ENCODE measurements at regions of chr14 and their contacts with region 1.

Region 1: GRCh38 chr14:75440733-75441477 is 13.1 kb downstream of the JDP2 start:
- DNase-seq: no peak
- CTCF ChIP-seq: no peak

Region 2: DNA sequence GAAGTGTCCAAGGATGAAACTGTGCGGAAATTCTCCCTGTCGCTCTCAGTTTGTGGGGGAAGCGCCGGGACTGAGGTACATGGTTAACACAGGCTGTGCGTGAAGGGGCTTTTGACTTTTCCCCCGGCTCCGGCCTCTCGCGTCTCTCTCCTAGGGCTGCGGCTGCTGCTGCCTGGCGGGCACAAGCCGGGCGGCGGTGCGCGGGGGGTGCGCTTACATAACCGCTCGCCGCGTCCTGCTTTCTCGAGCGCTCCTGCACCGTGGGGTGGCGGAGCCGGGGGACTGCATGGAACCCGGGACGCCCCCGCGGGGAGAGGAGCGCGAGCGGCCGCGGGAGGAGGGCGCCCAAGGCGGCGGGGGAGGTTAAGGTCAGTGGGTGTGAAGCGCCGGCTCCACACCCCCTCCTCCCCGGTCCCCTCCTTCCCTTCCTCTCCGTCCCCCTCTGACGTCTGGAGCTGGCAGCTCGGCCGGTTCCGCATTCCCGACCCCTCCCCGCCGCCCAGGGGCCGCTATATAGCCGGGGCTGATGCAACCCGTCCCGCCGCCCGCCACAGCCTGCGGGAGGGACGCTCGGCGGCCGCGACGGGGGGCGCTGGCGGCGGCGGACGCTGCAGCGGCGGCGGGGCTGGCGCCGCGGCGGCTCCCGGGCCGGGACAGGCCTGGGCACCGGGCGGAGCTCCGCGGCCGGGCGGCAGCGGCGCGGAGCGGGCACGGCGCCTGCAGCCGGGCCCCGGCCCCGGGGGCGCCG is 13.2 kb before region 1 on chr14 and contains the start of gene JDP2:
- CTCF ChIA-PET with region 1: interaction called, 21 read pairs
- POLR2A ChIA-PET with region 1: no interaction called
- DNase-seq: peak; percentile 62
- CTCF ChIP-seq: peak; percentile 1